PC-9 (cell line): ENCODE measurements at regions of chr14 and their contacts with region 1.

Region 1: GRCh38 chr14:72926292-72927028 is at the start of gene DCAF4:
- DNase-seq: peak; percentile 96 to 97
- H3K4me3 ChIP-seq: peak within 1 kb of the TSS; percentile 89
- H3K27ac ChIP-seq: peak within 1 kb of the TSS; percentile 62
- H3K4me1 ChIP-seq: no peaks in the 10 kb centered on the region
- H3K27me3 ChIP-seq: no peaks in the 10 kb centered on the region
- CTCF ChIP-seq: no peak
- total RNA-seq, gene DCAF4: 17.6 and 20.0 TPM in 2 replicates

Region 2: GRCh38 chr14:73026845-73027542 is 100.5 kb after region 1 on chr14 and contains the start of gene ZFYVE1:
- CTCF ChIA-PET with region 1: no interaction called
- POLR2A ChIA-PET with region 1: no interaction called
- intact Hi-C with region 1: loop called (anchors 1 kb)
- DNase-seq: peak; percentile 95
- H3K4me3 ChIP-seq: peak within 1 kb of the TSS; percentile 77
- H3K27ac ChIP-seq: no peak within 1 kb of the TSS
- H3K4me1 ChIP-seq: peaks cover 9% of the 10 kb centered on the region
- H3K27me3 ChIP-seq: no peaks in the 10 kb centered on the region
- CTCF ChIP-seq: no peak
- total RNA-seq, gene ZFYVE1: 8.8 and 9.0 TPM in 2 replicates

Region 3: DNA sequence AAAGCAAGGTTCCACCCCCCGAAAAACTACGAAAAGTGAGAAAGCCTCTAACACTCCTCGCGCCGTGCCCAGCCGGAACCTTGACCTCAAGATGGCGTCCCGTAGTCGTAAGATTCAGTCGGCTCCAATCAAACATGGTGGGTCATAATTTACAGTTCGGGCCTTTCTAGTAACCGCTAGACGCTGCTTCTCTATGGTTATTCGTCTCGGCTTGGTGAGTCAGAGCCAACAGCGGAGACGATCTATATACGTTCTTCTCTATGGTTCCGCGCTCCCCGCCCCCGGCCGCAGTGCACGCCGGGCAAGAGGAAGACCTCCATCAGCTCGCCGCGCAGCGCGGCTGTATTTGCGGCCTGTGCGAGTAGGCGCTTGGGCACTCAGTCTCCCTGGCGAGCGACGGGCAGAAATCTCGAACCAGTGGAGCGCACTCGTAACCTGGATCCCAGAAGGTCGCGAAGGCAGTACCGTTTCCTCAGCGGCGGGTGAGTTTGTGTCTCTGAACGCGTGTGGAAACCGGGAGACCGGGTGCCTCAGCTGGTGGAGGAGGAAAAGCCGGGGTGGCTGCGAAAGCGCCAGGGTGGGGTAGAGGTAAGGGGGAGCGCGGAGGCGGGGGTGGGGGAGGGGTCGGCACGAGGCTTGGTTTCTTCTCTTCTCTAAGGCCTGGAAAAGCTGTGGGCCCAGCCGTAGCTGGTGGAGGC is 131.9 kb after region 1 on chr14 and contains the start of gene RBM25:
- CTCF ChIA-PET with region 1: no interaction called
- POLR2A ChIA-PET with region 1: interaction called, 3 read pairs
- intact Hi-C with region 1: loop called (anchors 1 kb)
- DNase-seq: peak; percentile 96
- H3K4me3 ChIP-seq: peak within 1 kb of the TSS; percentile 99
- H3K27ac ChIP-seq: peak within 1 kb of the TSS; percentile 91
- H3K4me1 ChIP-seq: peaks cover 21% of the 10 kb centered on the region
- H3K27me3 ChIP-seq: no peaks in the 10 kb centered on the region
- CTCF ChIP-seq: no peak
- total RNA-seq, gene RBM25: 59.2 and 68.9 TPM in 2 replicates